CD14-positive monocyte (primary cell): ENCODE measurements at regions of chr17 and their contacts with region 1.

Region 1: GRCh38 chr17:11803231-11803969 is 193.9 kb downstream of the ZNF18 start:
- DNase-seq: no peak
- H3K4me3 ChIP-seq: no peak overlapping the region
- H3K4me3 Mint-ChIP-seq: no peak overlapping the region
- H3K27ac ChIP-seq: no peak overlapping the region
- H3K27ac Mint-ChIP-seq: no peak overlapping the region
- H3K4me1 ChIP-seq: no peaks in the 10 kb centered on the region
- H3K4me1 Mint-ChIP-seq: no peaks in the 10 kb centered on the region
- H3K27me3 ChIP-seq: no peaks in the 10 kb centered on the region
- H3K27me3 Mint-ChIP-seq: peaks cover 0 to 2% (median 0%) of the 10 kb centered on the region in 3 donors
- CTCF ChIP-seq: no peak

Region 2: DNA sequence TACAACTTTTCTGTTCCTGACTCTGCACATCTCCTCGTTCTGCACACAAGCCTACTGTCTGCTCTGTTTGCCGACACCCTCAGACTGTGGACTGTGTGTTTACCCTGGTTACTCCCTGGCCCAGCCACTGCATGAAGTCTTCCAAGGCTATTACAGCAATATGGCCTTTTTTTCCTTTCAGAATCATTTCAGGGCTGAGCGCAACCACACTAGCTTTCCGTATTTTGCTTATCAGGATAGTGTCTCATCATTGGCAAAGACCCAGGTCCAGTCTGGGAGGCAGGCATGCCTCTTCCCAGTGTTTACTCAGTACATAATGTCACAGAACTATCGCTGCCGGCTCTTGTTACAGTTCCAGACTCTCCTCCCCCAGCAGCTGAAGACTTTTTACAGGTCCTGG is 195.0 kb before region 1 on chr17:
- intact Hi-C with region 1: no loop called
- DNase-seq: no peak
- H3K4me3 ChIP-seq: no peak overlapping the region
- H3K4me3 Mint-ChIP-seq: no peak overlapping the region
- H3K27ac ChIP-seq: no peak overlapping the region
- H3K27ac Mint-ChIP-seq: no peak overlapping the region
- H3K4me1 ChIP-seq: no peaks in the 10 kb centered on the region
- H3K4me1 Mint-ChIP-seq: no peaks in the 10 kb centered on the region
- H3K27me3 ChIP-seq: no peaks in the 10 kb centered on the region
- H3K27me3 Mint-ChIP-seq: peaks cover 1 to 3% (median 2%) of the 10 kb centered on the region in 3 donors
- CTCF ChIP-seq: no peak

Region 3: GRCh38 chr17:11757815-11758214 is 45.6 kb before region 1 on chr17:
- intact Hi-C with region 1: loop called in 1 of 2 experiments (anchors 10 kb)
- DNase-seq: no peak
- H3K4me3 ChIP-seq: no peak overlapping the region
- H3K4me3 Mint-ChIP-seq: no peak overlapping the region
- H3K27ac ChIP-seq: no peak overlapping the region
- H3K27ac Mint-ChIP-seq: no peak overlapping the region
- H3K4me1 ChIP-seq: no peaks in the 10 kb centered on the region
- H3K4me1 Mint-ChIP-seq: no peaks in the 10 kb centered on the region
- H3K27me3 ChIP-seq: no peaks in the 10 kb centered on the region
- H3K27me3 Mint-ChIP-seq: peaks cover 0 to 2% (median 0%) of the 10 kb centered on the region in 3 donors
- CTCF ChIP-seq: no peak

Region 4: GRCh38 chr17:11840831-11841230 is 37.4 kb after region 1 on chr17:
- intact Hi-C with region 1: loop called in 1 of 2 experiments (anchors 2 kb)
- DNase-seq: no peak
- H3K4me3 ChIP-seq: no peak overlapping the region
- H3K4me3 Mint-ChIP-seq: no peak overlapping the region
- H3K27ac ChIP-seq: no peak overlapping the region
- H3K27ac Mint-ChIP-seq: no peak overlapping the region
- H3K4me1 ChIP-seq: no peaks in the 10 kb centered on the region
- H3K4me1 Mint-ChIP-seq: no peaks in the 10 kb centered on the region
- H3K27me3 ChIP-seq: no peaks in the 10 kb centered on the region
- H3K27me3 Mint-ChIP-seq: peaks cover 0 to 4% (median 0%) of the 10 kb centered on the region in 3 donors
- CTCF ChIP-seq: no peak